ENCODE measurements at regions of chrX and their contacts with region 1.

Region 1: GRCh38 chrX:136768469-136769084 is 12.2 kb downstream of the ARHGEF6 start:
- DNase-seq: no peak
- ATAC-seq: no peak
- H3K4me3 ChIP-seq: no peak overlapping the region
- H3K27ac ChIP-seq: no peak overlapping the region
- H3K4me1 ChIP-seq: no peaks in the 10 kb centered on the region
- H3K27me3 ChIP-seq: no peaks in the 10 kb centered on the region; a peak in 1 of 5 replicates
- CTCF ChIP-seq: no peak
- EP300 ChIP-seq: no peak
- POLR2A ChIP-seq: no peak
- RAD21 ChIP-seq: no peak

Region 2: GRCh38 chrX:136237074-136237473 is 531.5 kb before region 1 on chrX:
- CTCF ChIA-PET with region 1: no interaction called
- POLR2A ChIA-PET with region 1: no interaction called
- in situ Hi-C with region 1: no loop called
- intact Hi-C with region 1: no loop called
- DNase-seq: no peak
- ATAC-seq: no peak
- H3K4me3 ChIP-seq: no peak overlapping the region
- H3K27ac ChIP-seq: no peak overlapping the region
- H3K4me1 ChIP-seq: no peaks in the 10 kb centered on the region
- H3K27me3 ChIP-seq: no peaks in the 10 kb centered on the region
- CTCF ChIP-seq: no peak
- EP300 ChIP-seq: no peak
- POLR2A ChIP-seq: no peak
- RAD21 ChIP-seq: no peak

Region 3: DNA sequence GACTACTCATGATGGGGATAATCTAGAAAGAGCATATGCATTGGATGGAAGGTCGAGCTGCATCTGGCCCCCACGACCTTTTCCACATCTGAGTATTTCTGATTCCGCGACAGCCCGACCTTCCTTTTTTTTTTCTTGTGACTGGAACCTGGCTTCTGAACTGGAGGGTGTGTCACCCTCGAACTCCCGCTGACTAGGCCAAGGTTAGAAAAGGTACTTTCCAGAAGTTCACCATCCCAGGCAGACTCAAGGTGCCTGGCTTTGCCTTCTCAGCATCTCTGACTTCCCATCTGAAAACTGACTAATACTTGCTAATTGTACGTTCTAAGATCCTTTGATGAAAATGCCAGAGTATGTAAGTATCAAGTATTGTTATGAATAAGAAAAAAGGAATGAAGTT is 169.9 kb before region 1 on chrX:
- CTCF ChIA-PET with region 1: no interaction called
- POLR2A ChIA-PET with region 1: no interaction called
- in situ Hi-C with region 1: no loop called
- intact Hi-C with region 1: no loop called
- DNase-seq: no peak
- ATAC-seq: no peak
- H3K4me3 ChIP-seq: no peak overlapping the region
- H3K27ac ChIP-seq: no peak overlapping the region
- H3K4me1 ChIP-seq: no peaks in the 10 kb centered on the region
- H3K27me3 ChIP-seq: no peaks in the 10 kb centered on the region
- CTCF ChIP-seq: no peak
- EP300 ChIP-seq: no peak
- POLR2A ChIP-seq: no peak
- RAD21 ChIP-seq: no peak

Region 4: GRCh38 chrX:136802515-136802914 is 33.9 kb after region 1 on chrX:
- CTCF ChIA-PET with region 1: no interaction called
- POLR2A ChIA-PET with region 1: no interaction called
- in situ Hi-C with region 1: no loop called
- intact Hi-C with region 1: loop called (anchors 2 kb)
- DNase-seq: no peak
- ATAC-seq: no peak
- H3K4me3 ChIP-seq: no peak overlapping the region
- H3K27ac ChIP-seq: no peak overlapping the region
- H3K4me1 ChIP-seq: no peaks in the 10 kb centered on the region
- H3K27me3 ChIP-seq: no peaks in the 10 kb centered on the region
- CTCF ChIP-seq: no peak
- EP300 ChIP-seq: no peak
- POLR2A ChIP-seq: no peak
- RAD21 ChIP-seq: no peak

Measured in HepG2 (cell line).